ENCODE measurements at regions of chr15 and their contacts with region 1.

Region 1: DNA sequence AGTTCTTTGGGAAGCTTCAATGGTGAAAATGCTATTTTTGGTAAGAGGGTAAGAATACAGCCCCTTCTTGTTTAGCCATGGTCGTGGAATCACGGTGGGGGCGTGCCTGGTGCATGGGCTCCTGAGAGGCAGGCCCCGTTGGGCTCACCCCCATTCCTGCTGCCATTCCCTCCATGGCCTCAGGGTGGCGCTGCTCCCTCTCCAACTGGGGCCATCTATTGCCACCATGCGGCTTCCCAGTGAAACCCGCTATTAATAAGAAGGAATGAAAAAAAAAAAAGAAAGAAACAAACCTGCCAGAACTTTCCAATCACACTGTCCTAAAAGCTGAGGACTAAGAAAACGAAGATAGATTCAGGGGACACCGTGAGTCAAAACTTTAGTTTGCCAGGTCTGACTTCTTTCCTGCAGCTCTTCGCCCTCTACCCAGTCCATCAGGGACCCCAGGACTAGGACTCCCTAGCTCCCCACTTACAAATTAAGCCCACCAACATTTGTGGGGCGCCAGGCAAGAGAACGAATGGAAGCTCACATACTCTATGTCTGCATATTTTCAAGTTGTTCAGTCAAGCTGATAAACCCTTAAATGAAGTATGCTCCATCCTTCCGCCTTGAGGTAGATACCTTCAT is 30.6 kb upstream of the ABHD2 start:
- DNase-seq: no peak
- H3K4me3 ChIP-seq: no peak overlapping the region
- CTCF ChIP-seq: peak; percentile 98

Region 2: DNA sequence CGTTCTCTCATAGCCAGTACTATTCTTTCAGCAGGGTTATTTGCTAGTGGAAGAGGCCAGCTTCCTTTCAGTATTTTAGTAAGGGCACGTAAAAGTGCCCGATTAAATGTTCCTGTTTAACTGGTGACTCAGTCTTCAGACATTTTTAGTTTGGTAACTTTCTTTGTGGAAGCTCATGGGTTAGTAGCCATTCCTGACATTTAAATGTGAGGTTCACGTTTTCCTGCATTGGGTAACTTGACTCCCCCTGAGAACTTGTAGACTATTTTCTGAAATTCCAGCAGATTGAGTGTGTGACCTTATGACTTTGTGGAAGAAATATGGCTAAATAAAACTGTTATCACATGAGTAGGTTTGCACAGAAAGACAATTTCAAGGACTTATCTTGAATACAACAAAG is 47.5 kb after region 1 on chr15:
- in situ Hi-C with region 1: loop called (anchors 5 kb)
- DNase-seq: peak; percentile 89
- H3K4me3 ChIP-seq: no peak overlapping the region
- CTCF ChIP-seq: no peak